H1 (cell line): ENCODE measurements at regions of chr5 and their contacts with region 1.

Region 1: DNA sequence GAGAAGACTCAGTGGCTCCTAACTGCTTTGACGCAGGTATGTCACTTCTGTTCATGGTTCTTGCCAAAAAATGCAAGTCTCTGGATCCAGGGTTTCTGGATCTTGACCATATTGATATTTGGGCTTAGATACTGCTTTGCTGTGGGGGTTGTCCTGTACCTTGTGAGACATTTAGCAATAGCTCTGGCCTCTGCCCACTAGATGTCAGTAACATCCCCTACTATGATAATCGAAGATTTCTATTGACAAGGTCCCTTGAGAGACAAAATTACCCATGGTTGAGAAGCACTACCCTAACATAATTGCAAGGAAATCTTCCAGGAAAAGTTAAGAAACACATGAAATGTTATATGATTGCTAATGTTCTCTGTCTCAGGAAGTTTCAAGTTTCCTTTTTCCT is 285.4 kb downstream of the TMEM232 start:
- DNase-seq: peak in 1 of 2 experiments; percentile 15
- H3K4me3 ChIP-seq: no peak overlapping the region
- H3K27ac ChIP-seq: no peak overlapping the region
- H3K4me1 ChIP-seq: no peaks in the 10 kb centered on the region
- H3K27me3 ChIP-seq: no peaks in the 10 kb centered on the region
- CTCF ChIP-seq: peak in 2 of 3 experiments; percentile 74 to 75; a peak in 3 of 4 replicates
- EP300 ChIP-seq: no peak
- POLR2A ChIP-seq: no peak
- RAD21 ChIP-seq: peak; percentile 94 to 97

Region 2: GRCh38 chr5:110590187-110590586 is 149.2 kb after region 1 on chr5:
- CTCF ChIA-PET with region 1: interaction called, 15 read pairs
- POLR2A ChIA-PET with region 1: no interaction called
- DNase-seq: no peak
- H3K4me3 ChIP-seq: no peak overlapping the region
- H3K27ac ChIP-seq: no peak overlapping the region
- H3K4me1 ChIP-seq: no peaks in the 10 kb centered on the region
- H3K27me3 ChIP-seq: no peaks in the 10 kb centered on the region
- CTCF ChIP-seq: peak in 2 of 3 experiments; percentile 55 to 61; a peak in 3 of 4 replicates
- EP300 ChIP-seq: no peak
- POLR2A ChIP-seq: no peak
- RAD21 ChIP-seq: peak; percentile 68 to 77

Region 3: DNA sequence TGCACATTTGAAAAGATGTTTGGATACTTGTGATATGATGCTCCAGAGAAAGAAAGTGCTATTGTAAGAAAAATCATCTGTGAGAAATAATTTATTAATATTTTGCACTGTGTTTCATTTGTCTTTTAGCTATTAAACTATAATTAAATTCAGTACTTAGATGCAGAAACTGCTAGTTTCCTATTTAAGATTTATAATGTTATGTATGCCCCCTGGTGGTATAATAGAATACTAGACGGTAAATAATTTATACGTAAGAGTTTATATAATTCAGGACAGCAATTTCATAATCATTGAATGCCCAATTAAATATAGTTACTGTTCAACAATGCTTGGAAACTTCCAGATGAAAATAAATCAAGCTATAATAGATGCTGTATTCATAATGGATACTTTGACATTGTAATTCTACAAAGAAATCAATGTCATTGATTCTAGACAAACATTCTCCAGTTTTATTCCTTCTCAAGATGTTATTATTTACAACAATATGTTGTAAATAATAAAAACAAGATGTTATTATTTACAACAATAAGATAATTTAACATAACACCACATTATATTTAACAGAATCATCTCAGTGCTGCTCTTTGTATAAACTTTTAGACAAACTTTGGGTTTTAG is 184.5 kb after region 1 on chr5:
- CTCF ChIA-PET with region 1: interaction called, 28 read pairs
- POLR2A ChIA-PET with region 1: no interaction called
- DNase-seq: no peak
- H3K4me3 ChIP-seq: no peak overlapping the region
- H3K27ac ChIP-seq: no peak overlapping the region
- H3K4me1 ChIP-seq: no peaks in the 10 kb centered on the region
- H3K27me3 ChIP-seq: no peaks in the 10 kb centered on the region
- CTCF ChIP-seq: peak in 1 of 3 experiments; percentile 6; a peak in 2 of 4 replicates
- EP300 ChIP-seq: no peak
- POLR2A ChIP-seq: no peak
- RAD21 ChIP-seq: peak in 1 of 2 experiments; percentile 35; a peak in 3 of 4 replicates